Ovary (tissue), 10 donors: ENCODE measurements at regions of chr6 and their contacts with region 1.

Region 1: DNA sequence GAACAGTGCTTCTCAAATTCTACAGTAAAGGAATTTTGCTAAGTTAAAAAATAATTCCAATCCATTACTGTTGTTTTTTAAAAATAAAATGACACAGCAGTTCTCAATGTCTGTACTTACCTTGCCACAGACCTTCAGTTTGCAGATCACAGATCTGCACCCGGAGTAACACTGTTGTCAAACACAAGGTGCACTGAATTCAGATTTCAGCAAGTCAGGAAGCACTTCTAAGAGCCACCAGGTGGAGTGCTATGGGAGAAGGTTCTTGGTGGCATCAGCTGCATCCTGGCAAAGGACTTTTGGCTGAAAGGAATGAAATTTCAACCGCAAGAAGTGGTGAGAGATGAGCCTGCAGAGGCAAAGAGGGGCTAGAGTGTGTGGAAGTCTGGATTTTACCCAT is 17.4 kb downstream of the RSPH4A start:
- DNase-seq: no peak
- H3K4me3 ChIP-seq: no peak overlapping the region
- H3K27ac ChIP-seq: no peak overlapping the region
- H3K4me1 ChIP-seq: peaks cover 4% of the 10 kb centered on the region
- H3K27me3 ChIP-seq: no peaks in the 10 kb centered on the region
- CTCF ChIP-seq: no peak
- EP300 ChIP-seq: no peak
- POLR2A ChIP-seq: no peak

Region 2: GRCh38 chr6:116611056-116611455 is 22.6 kb before region 1 on chr6:
- intact Hi-C with region 1: loop called in 1 of 4 experiments (anchors 1 kb)
- DNase-seq: no peak
- H3K4me3 ChIP-seq: no peak overlapping the region
- H3K27ac ChIP-seq: no peak overlapping the region
- H3K4me1 ChIP-seq: no peaks in the 10 kb centered on the region
- H3K27me3 ChIP-seq: no peaks in the 10 kb centered on the region
- CTCF ChIP-seq: no peak
- EP300 ChIP-seq: no peak
- POLR2A ChIP-seq: no peak